ENCODE measurements at regions of chr17 and their contacts with region 1.

Region 1: DNA sequence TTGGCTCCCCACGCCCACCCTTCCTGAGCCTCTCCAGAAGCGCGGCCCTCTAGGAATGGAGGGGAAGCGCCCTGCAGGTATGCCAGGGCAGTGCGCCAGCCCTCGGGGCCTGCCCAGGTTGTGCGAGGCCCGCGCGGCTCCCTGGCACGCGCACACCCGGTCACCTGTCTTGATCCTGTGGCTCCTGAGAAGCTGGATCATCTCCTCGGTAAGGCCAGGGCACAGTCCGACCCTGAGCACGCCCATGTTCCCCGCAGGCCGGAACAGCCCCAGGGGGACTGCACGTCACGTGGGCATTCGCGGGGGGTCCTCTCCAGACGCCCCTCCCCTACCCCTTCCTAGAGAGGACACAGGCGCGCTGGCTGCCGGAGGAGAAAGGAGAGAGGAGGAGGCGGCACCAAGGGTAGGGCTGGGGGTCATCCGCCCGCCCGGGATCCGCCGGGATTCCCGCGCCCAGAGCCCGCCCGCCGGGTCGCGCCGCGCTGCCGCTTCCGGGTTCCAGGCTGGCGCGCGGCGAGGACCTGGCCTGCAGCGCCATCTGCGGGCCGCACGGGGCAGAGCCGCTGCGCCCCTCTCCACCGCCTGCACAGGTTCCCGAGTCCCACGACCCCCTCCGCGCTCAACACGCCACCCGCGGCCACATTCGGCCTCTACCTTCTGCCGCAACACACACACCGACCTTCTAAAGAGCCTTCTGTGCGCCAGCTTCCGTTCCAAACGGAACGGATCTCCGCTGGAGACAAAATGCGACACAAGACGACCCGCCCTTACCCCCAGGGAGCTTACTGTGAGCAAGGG is at the start of gene RAD51D:
- DNase-seq: no peak
- H3K4me3 ChIP-seq: peak within 1 kb of the TSS; percentile 74 to 89 (median 88)
- H3K27ac ChIP-seq: peak within 1 kb of the TSS; percentile 74 to 83 (median 80)
- H3K4me1 ChIP-seq: peaks cover 16 to 39% (median 21%) of the 10 kb centered on the region in 4 donors
- H3K27me3 ChIP-seq: no peaks in the 10 kb centered on the region
- CTCF ChIP-seq: peak in 2 of 3 experiments; percentile 92 to 99
- EP300 ChIP-seq: no peak
- POLR2A ChIP-seq: no peak
- total RNA-seq, gene RAD51D: 8.9 to 12.8 (median 10.7) TPM

Region 2: GRCh38 chr17:34420254-34420766 is 699.3 kb before region 1 on chr17:
- intact Hi-C with region 1: loop called (anchors 2 kb)
- DNase-seq: no peak
- H3K4me3 ChIP-seq: no peak overlapping the region
- H3K27ac ChIP-seq: no peak overlapping the region
- H3K4me1 ChIP-seq: no peaks in the 10 kb centered on the region
- H3K27me3 ChIP-seq: peaks cover 0 to 76% (median 8%) of the 10 kb centered on the region in 4 donors
- CTCF ChIP-seq: peak in 2 of 3 experiments; percentile 89 to 93
- EP300 ChIP-seq: no peak
- POLR2A ChIP-seq: no peak

Region 3: GRCh38 chr17:34542700-34543336 is 576.7 kb before region 1 on chr17:
- intact Hi-C with region 1: loop called (anchors 2 kb)
- DNase-seq: no peak
- H3K4me3 ChIP-seq: no peak overlapping the region
- H3K27ac ChIP-seq: no peak overlapping the region
- H3K4me1 ChIP-seq: no peaks in the 10 kb centered on the region
- H3K27me3 ChIP-seq: peaks cover 0 to 66% (median 0%) of the 10 kb centered on the region in 4 donors
- CTCF ChIP-seq: peak; percentile 70 to 82 (median 73)
- EP300 ChIP-seq: no peak
- POLR2A ChIP-seq: no peak

Region 4: GRCh38 chr17:34637548-34638525 is 481.7 kb before region 1 on chr17:
- intact Hi-C with region 1: loop called (anchors 10 kb)
- DNase-seq: no peak
- H3K4me3 ChIP-seq: peak overlapping the region; percentile 46 to 59 (median 50)
- H3K27ac ChIP-seq: no peak overlapping the region
- H3K4me1 ChIP-seq: peaks cover 3 to 14% (median 12%) of the 10 kb centered on the region in 4 donors
- H3K27me3 ChIP-seq: peaks cover 0 to 92% (median 4%) of the 10 kb centered on the region in 4 donors
- CTCF ChIP-seq: peak; percentile 65 to 88 (median 82)
- EP300 ChIP-seq: no peak
- POLR2A ChIP-seq: no peak

Region 5: GRCh38 chr17:34998205-34998604 is 121.4 kb before region 1 on chr17:
- intact Hi-C with region 1: loop called (anchors 2 kb)
- DNase-seq: peak; percentile 93
- H3K4me3 ChIP-seq: peak overlapping the region; percentile 5 to 24 (median 13)
- H3K27ac ChIP-seq: peak overlapping the region; percentile 84 to 89 (median 88)
- H3K4me1 ChIP-seq: peaks cover 24 to 61% (median 54%) of the 10 kb centered on the region in 4 donors
- H3K27me3 ChIP-seq: no peaks in the 10 kb centered on the region
- CTCF ChIP-seq: peak; percentile 57 to 76 (median 70)
- EP300 ChIP-seq: no peak
- POLR2A ChIP-seq: no peak

Region 6: GRCh38 chr17:35056013-35056412 is 63.6 kb before region 1 on chr17:
- intact Hi-C with region 1: no loop called
- DNase-seq: no peak
- H3K4me3 ChIP-seq: no peak overlapping the region
- H3K27ac ChIP-seq: no peak overlapping the region
- H3K4me1 ChIP-seq: peaks cover 0 to 18% (median 17%) of the 10 kb centered on the region in 4 donors
- H3K27me3 ChIP-seq: no peaks in the 10 kb centered on the region
- CTCF ChIP-seq: no peak
- EP300 ChIP-seq: no peak
- POLR2A ChIP-seq: no peak

Region 7: DNA sequence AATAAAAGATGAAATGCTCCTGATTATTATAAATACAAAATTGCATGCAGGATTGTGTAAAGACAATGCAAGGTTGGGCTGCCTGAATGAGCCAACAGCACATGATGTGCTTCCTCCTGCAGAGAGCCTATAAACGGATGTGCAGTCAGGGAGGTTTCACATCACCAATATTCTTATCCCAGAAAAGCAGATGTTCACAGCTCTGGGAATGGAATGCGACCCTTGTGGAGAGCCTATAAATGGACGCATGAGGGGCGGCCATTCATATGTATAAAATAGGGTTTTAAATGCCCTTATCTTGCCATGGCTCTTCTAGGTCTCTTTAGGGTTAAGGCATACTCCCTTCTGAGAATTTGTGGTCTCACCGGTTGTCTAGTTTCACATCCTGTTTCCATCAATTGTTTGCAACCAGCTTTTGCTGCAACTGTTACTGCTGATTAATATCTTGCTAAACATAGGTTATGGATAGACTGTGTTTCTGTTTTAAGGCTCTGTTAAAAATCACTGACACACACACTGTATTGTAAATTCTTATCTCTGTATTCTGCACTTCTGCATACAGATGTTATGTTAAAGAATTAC is 221.9 kb after region 1 on chr17:
- intact Hi-C with region 1: no loop called
- DNase-seq: no peak
- H3K4me3 ChIP-seq: no peak overlapping the region
- H3K27ac ChIP-seq: no peak overlapping the region
- H3K4me1 ChIP-seq: peaks cover 11 to 17% (median 15%) of the 10 kb centered on the region in 4 donors
- H3K27me3 ChIP-seq: peaks cover 0 to 34% (median 8%) of the 10 kb centered on the region in 4 donors
- CTCF ChIP-seq: no peak
- EP300 ChIP-seq: no peak
- POLR2A ChIP-seq: no peak

Measured in esophagus muscularis mucosa (tissue), 4 donors.